ENCODE measurements at regions of chrX and their contacts with region 1.

Region 1: DNA sequence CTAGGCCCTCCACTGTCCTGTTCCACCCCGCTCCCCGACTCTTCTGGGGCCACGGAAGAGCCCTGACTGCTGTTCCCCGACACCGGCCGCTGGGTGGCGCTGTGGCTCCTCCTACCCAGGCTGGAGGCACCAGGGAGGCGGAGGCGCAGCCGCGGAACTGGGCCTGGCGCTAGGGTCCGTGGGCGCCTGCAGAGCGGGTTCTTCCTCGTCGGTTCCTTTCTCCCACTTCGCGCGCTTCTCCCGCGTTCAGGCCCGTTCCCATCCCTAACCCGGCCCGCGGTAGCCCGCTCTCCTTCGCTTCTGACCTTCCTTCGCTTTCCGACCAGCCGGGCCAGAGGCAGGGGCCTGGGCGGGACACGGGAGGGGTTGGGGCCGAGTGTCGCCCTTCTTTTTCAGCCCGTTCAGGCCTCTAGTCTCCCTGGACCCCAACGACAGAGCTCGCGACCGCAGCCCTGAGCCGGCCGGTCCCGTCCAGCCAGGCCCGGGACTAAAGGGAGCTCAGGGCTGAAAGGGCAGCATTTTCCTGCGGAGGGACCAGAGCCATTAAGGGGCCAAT is 34.3 kb downstream of the NALF2 start:
- DNase-seq: peak; percentile 87
- ATAC-seq: peak; percentile 99
- H3K4me3 ChIP-seq: peak overlapping the region; percentile 45
- H3K27ac ChIP-seq: no peak overlapping the region
- H3K4me1 ChIP-seq: no peaks in the 10 kb centered on the region
- H3K27me3 ChIP-seq: no peaks in the 10 kb centered on the region
- CTCF ChIP-seq: peak; percentile 72

Region 2: DNA sequence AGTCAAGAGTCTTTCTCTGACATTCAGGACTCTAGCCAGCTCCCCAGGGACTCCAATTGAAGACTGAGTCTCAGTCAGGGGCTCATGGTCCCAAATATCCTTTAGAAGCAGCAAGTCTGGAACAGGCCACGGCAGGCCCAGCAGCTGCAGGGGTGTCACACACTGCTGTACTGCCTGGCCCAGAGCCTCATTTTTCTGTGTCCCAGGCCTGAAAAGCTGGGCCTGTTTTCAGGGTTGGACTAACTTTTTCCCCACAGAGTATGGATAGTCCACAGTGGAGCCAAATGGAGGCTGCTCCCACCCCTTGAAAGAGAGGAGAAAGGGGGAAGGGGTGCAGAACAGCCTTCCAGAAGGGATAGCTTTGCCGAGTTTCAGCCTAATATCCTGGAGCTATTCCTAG is 181.1 kb before region 1 on chrX:
- intact Hi-C with region 1: no loop called
- DNase-seq: no peak
- ATAC-seq: no peak
- H3K4me3 ChIP-seq: no peak overlapping the region
- H3K27ac ChIP-seq: no peak overlapping the region
- H3K4me1 ChIP-seq: no peaks in the 10 kb centered on the region
- H3K27me3 ChIP-seq: no peaks in the 10 kb centered on the region
- CTCF ChIP-seq: no peak

Region 3: DNA sequence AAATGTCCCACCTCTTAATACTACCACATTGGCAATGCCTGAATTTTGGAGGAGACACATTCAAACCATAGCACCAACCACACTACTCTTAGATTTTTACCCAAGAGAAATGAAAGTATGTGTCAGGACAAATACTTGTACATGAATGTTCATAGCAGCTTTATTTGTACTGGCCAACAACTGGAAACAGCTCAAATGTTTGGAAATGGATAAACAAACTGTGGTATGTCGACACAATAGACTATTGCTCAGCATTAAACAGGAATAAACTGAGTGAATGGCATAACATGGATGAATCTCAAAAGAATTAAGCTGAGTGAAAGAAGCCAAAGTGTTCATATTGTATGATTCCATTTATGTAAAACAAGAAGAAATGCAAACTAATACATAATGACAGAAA is 59.0 kb after region 1 on chrX:
- intact Hi-C with region 1: no loop called
- DNase-seq: no peak
- ATAC-seq: no peak
- H3K4me3 ChIP-seq: no peak overlapping the region
- H3K27ac ChIP-seq: no peak overlapping the region
- H3K4me1 ChIP-seq: no peaks in the 10 kb centered on the region
- H3K27me3 ChIP-seq: no peaks in the 10 kb centered on the region
- CTCF ChIP-seq: no peak

Region 4: DNA sequence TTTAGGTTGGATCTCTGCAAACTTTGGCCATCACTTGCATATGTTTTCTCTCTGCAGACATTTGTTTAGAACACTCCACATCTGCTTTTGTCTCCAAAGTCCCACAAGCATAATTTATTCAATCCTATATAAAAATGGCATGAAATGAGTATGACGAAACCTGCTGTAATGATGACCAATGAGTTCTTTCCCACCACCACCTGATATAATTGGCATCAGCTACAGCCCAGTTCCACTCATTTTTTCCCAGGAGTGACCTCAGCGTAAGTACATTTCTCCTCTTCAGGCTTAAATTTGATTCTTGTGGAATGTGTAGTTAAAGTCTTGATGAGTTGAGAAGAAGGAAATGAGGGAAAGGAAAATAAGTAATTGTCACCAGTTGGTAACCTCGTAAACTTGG is 306.2 kb after region 1 on chrX:
- intact Hi-C with region 1: no loop called
- DNase-seq: no peak
- ATAC-seq: no peak
- H3K4me3 ChIP-seq: no peak overlapping the region
- H3K27ac ChIP-seq: no peak overlapping the region
- H3K4me1 ChIP-seq: no peaks in the 10 kb centered on the region
- H3K27me3 ChIP-seq: no peaks in the 10 kb centered on the region
- CTCF ChIP-seq: no peak

Region 5: GRCh38 chrX:70096052-70096451 is 557.7 kb after region 1 on chrX:
- intact Hi-C with region 1: loop called (anchors 5 kb)
- DNase-seq: no peak
- ATAC-seq: no peak
- H3K4me3 ChIP-seq: no peak overlapping the region
- H3K27ac ChIP-seq: no peak overlapping the region
- H3K4me1 ChIP-seq: no peaks in the 10 kb centered on the region
- H3K27me3 ChIP-seq: no peaks in the 10 kb centered on the region
- CTCF ChIP-seq: peak; percentile 5